ENCODE measurements at regions of chr22 and their contacts with region 1.

Region 1: GRCh38 chr22:41603873-41604332 is 14.3 kb upstream of the PMM1 start:
- DNase-seq: peak; percentile 89
- H3K4me3 Mint-ChIP-seq: no peak overlapping the region
- H3K27ac Mint-ChIP-seq: peak overlapping the region; percentile 74
- H3K4me1 Mint-ChIP-seq: peaks cover 32% of the 10 kb centered on the region
- H3K27me3 Mint-ChIP-seq: peaks cover 5% of the 10 kb centered on the region

Region 2: DNA sequence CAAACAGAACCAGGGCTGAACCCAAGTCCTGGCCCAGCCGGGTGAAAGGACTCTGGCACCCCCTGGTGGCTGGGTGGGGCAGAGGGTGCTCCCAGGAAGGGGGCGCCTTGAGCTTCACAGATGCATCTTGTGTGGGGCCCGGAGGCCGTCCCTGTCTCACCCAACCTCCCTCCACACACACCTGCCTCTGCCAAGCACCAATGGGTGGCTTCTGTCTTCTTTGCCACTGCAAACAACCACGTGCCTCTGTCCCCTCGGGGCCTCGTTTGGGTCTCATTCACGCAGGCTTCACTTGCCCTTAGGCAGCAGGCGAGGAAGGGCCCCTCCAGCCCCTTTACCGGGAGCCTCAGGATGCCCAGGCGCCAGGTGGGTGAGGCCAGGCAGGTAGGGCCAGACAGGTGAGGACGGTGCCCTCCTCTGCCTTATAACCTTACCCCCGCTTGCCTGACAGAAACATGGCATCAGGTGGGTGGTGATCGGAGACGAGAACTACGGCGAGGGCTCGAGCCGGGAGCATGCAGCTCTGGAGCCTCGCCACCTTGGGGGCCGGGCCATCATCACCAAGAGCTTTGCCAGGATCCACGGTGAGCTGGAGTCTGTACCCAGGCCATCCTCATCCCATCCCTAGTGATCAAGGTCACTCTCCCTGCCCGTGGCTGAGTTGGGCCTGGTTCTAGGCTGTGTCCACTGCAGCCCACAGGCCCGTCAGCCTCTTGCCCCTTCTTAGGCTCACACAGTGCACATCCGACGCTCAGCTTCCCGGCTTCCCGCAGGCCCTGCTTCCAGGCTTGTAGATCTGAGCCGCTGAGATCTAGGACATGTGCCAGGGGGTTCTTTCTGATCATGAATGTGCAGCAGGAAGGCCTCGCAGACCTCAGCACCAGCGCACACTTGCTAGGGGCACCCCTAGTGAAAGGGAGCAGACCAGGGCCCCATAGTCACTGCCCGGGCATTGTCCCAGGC is 76.8 kb before region 1 on chr22:
- intact Hi-C with region 1: no loop called
- DNase-seq: peak; percentile 90
- H3K4me3 Mint-ChIP-seq: no peak overlapping the region
- H3K27ac Mint-ChIP-seq: peak overlapping the region; percentile 28
- H3K4me1 Mint-ChIP-seq: peaks cover 10% of the 10 kb centered on the region
- H3K27me3 Mint-ChIP-seq: no peaks in the 10 kb centered on the region

Region 3: DNA sequence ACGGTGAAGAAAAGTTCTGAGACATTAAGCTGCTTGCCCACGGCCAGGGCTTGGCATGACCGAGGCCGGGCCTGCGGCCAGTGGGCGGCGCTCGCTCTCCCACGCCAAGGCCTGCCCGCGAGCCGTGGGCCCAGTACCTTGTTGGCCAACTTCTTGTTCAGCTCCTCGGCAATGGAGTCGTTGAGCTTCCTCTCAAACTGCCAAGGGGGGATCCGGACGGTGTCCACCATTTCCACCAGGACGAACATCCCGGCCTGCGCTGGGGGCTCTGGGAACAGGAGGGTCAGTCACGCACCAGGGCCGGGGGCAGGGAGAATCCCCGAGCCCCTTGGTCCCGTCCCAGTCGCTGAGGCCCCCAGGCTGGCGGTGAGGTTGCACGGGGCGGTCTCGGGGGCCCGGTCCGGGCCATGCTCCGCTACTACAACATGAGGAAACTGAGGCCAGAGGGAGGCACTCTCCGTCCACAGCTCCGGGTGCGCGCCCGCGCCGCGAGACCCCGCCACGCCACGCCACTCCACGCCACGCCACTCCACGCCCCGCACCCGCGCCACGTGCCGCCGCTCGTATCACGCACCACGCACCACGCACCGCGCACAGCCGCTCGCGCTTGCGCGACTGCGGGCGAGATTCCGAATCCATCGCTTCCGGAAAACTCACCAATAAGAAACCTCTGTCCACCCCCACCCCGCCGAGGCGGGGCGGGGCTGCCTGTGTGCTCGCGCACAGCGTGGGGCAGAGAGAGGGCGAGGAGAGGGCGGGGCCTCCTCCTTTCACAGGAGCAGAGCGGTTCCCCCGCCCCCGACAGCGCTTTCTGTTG is 59.8 kb before region 1 on chr22 and contains the start of gene POLR3H:
- intact Hi-C with region 1: loop called (anchors 5 kb)
- DNase-seq: peak; percentile 99
- H3K4me3 Mint-ChIP-seq: peak within 1 kb of the TSS; percentile 95
- H3K27ac Mint-ChIP-seq: peak within 1 kb of the TSS; percentile 89
- H3K4me1 Mint-ChIP-seq: peaks cover 29% of the 10 kb centered on the region
- H3K27me3 Mint-ChIP-seq: no peaks in the 10 kb centered on the region
- total RNA-seq, gene POLR3H: 49.2 and 50.6 TPM in 2 replicates

Region 4: GRCh38 chr22:41589391-41590241 is 14.3 kb before region 1 on chr22 and contains the start of gene PMM1:
- intact Hi-C with region 1: loop called (anchors 2 kb)
- DNase-seq: peak; percentile 100
- H3K4me3 Mint-ChIP-seq: peak within 1 kb of the TSS; percentile 95
- H3K27ac Mint-ChIP-seq: peak within 1 kb of the TSS; percentile 86
- H3K4me1 Mint-ChIP-seq: peaks cover 23% of the 10 kb centered on the region
- H3K27me3 Mint-ChIP-seq: no peaks in the 10 kb centered on the region
- total RNA-seq, gene PMM1: 19.7 and 23.1 TPM in 2 replicates

Region 5: GRCh38 chr22:41648432-41648831 is 44.5 kb after region 1 on chr22:
- intact Hi-C with region 1: no loop called
- DNase-seq: no peak
- H3K4me3 Mint-ChIP-seq: no peak overlapping the region
- H3K27ac Mint-ChIP-seq: no peak overlapping the region
- H3K4me1 Mint-ChIP-seq: peaks cover 5% of the 10 kb centered on the region
- H3K27me3 Mint-ChIP-seq: no peaks in the 10 kb centered on the region